Heart left ventricle (tissue), 16 donors: ENCODE measurements at regions of chr3 and their contacts with region 1.

Region 1: GRCh38 chr3:69665026-69665737 is 74.1 kb upstream of the MITF start:
- DNase-seq: peak in 4 of 5 donors; percentile 18 to 55 (median 28)
- ATAC-seq: peak; percentile 83 to 94 (median 90)
- H3K4me3 ChIP-seq: no peak overlapping the region
- H3K27ac ChIP-seq: peak overlapping the region in 10 of 12 donors; percentile 2 to 55 (median 16)
- H3K4me1 ChIP-seq: peaks cover 0 to 25% (median 15%) of the 10 kb centered on the region in 12 donors
- H3K27me3 ChIP-seq: no peaks in the 10 kb centered on the region
- CTCF ChIP-seq: no peak
- POLR2A ChIP-seq: no peak

Region 2: GRCh38 chr3:69324362-69325025 is 340.7 kb before region 1 on chr3:
- intact Hi-C with region 1: loop called in 8 of 10 experiments (anchors 5 to 10 kb)
- DNase-seq: peak in 1 of 5 donors; percentile 40
- ATAC-seq: peak in 3 of 4 donors; percentile 23 to 60 (median 32)
- H3K4me3 ChIP-seq: no peak overlapping the region
- H3K27ac ChIP-seq: peak overlapping the region in 3 of 12 donors; percentile 23 to 90 (median 83)
- H3K4me1 ChIP-seq: peaks cover 0 to 97% (median 42%) of the 10 kb centered on the region in 12 donors
- H3K27me3 ChIP-seq: no peaks in the 10 kb centered on the region
- CTCF ChIP-seq: peak in 11 of 12 donors; percentile 29 to 64 (median 51)
- POLR2A ChIP-seq: no peak

Region 3: GRCh38 chr3:69439643-69440270 is 225.4 kb before region 1 on chr3:
- intact Hi-C with region 1: loop called in 7 of 10 experiments (anchors 5 to 10 kb)
- DNase-seq: no peak
- ATAC-seq: peak in 2 of 4 donors; percentile 42 to 59
- H3K4me3 ChIP-seq: peak overlapping the region in 6 of 12 donors; percentile 8 to 39 (median 23)
- H3K27ac ChIP-seq: peak overlapping the region in 1 of 12 donors; percentile 16
- H3K4me1 ChIP-seq: peaks cover 0 to 20% (median 0%) of the 10 kb centered on the region in 12 donors
- H3K27me3 ChIP-seq: no peaks in the 10 kb centered on the region
- CTCF ChIP-seq: peak; percentile 26 to 76 (median 64)
- POLR2A ChIP-seq: no peak

Region 4: GRCh38 chr3:69542221-69543079 is 122.7 kb before region 1 on chr3:
- intact Hi-C with region 1: loop called in 1 of 10 experiments (anchors 5 kb)
- DNase-seq: peak in 4 of 5 donors; percentile 20 to 70 (median 46)
- ATAC-seq: peak; percentile 12 to 77 (median 70)
- H3K4me3 ChIP-seq: peak overlapping the region; percentile 55 to 77 (median 62)
- H3K27ac ChIP-seq: peak overlapping the region in 9 of 12 donors; percentile 3 to 70 (median 47)
- H3K4me1 ChIP-seq: peaks cover 0 to 24% (median 5%) of the 10 kb centered on the region in 12 donors
- H3K27me3 ChIP-seq: peaks cover 0 to 13% (median 0%) of the 10 kb centered on the region in 9 donors
- CTCF ChIP-seq: no peak
- POLR2A ChIP-seq: no peak

Region 5: GRCh38 chr3:69558912-69559311 is 106.3 kb before region 1 on chr3:
- intact Hi-C with region 1: loop called in 3 of 10 experiments (anchors 10 kb)
- DNase-seq: peak in 4 of 5 donors; percentile 45 to 63 (median 55)
- ATAC-seq: peak; percentile 74 to 93 (median 92)
- H3K4me3 ChIP-seq: no peak overlapping the region
- H3K27ac ChIP-seq: peak overlapping the region in 1 of 12 donors; percentile 38
- H3K4me1 ChIP-seq: peaks cover 0 to 33% (median 10%) of the 10 kb centered on the region in 12 donors
- H3K27me3 ChIP-seq: no peaks in the 10 kb centered on the region
- CTCF ChIP-seq: no peak
- POLR2A ChIP-seq: no peak

Region 6: DNA sequence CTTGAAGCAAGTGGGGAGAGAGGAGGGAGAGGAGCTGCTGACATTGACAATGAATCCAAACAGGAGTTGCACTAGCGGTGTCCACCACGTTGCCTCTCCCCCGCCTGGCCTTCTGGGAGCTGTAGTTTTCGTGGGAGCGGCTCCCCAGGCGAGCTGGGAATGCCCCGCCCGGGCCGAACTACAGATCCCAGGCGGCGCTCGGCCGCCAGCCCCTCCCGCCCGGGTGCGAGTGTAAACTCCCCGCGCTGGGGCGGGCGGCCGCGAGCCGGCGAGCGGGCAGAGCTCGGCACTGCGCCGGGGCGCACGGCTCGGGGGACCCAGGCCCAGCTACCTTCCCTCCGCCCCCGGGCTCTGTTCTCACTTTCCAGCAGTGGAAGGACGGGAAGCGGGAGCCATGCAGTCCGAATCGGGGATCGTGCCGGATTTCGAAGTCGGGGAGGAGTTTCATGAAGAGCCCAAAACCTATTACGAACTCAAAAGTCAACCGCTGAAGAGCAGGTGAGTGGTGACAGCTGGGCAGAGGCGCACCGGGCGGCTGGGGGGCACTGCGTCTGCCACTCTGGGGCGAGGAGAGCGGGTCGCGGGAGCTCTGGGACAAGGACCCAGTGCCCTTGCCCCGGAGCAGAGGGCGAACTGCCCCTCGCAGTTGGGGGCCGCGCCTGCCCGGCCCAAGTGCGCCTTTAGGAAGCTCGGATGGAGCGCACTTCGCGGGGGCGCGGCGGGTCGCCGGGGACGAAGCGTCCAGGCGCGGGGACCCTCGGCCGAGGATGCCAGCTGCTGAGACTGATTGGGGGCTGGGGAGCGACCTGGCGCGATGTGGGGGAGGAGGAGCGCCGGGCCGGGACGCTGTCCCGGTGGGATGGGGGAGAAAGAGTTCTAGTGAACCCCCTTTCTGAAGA is 74.3 kb after region 1 on chr3 and contains the start of gene MITF:
- intact Hi-C with region 1: no loop called
- DNase-seq: peak; percentile 94 to 97 (median 95)
- ATAC-seq: peak; percentile 95 to 98 (median 98)
- H3K4me3 ChIP-seq: peak within 1 kb of the TSS; percentile 67 to 98 (median 84)
- H3K27ac ChIP-seq: peak within 1 kb of the TSS; percentile 79 to 94 (median 92)
- H3K4me1 ChIP-seq: peaks cover 0 to 51% (median 26%) of the 10 kb centered on the region in 12 donors
- H3K27me3 ChIP-seq: no peaks in the 10 kb centered on the region
- CTCF ChIP-seq: peak in 1 of 12 donors; percentile 6
- POLR2A ChIP-seq: peak; percentile 71 to 91
- total RNA-seq, gene MITF: 61.4 to 114 (median 86.9) TPM